Naive thymus-derived CD4-positive, alpha-beta T cell (primary cell): ENCODE measurements at regions of chr12 and their contacts with region 1.

Region 1: GRCh38 chr12:49322708-49323523 is at the start of gene TROAP:
- DNase-seq: peak; percentile 89 to 98 (median 96)
- ATAC-seq: peak; percentile 97
- H3K4me3 ChIP-seq: peak within 1 kb of the TSS; percentile 75
- H3K4me3 Mint-ChIP-seq: peak within 1 kb of the TSS; percentile 86 to 98 (median 92)
- H3K27ac ChIP-seq: peak within 1 kb of the TSS; percentile 72
- H3K27ac Mint-ChIP-seq: peak within 1 kb of the TSS; percentile 29 to 95 (median 83)
- H3K4me1 ChIP-seq: peaks cover 5 to 14% of the 10 kb centered on the region in 2 donors
- H3K4me1 Mint-ChIP-seq: peaks cover 16 to 25% (median 19%) of the 10 kb centered on the region in 7 donors
- H3K27me3 ChIP-seq: no peaks in the 10 kb centered on the region
- H3K27me3 Mint-ChIP-seq: peaks cover 0 to 5% (median 0%) of the 10 kb centered on the region in 5 donors
- total RNA-seq, gene TROAP: 0.83 to 58.2 (median 1.3) TPM in 4 of 5 experiments, not detected in the other

Region 2: GRCh38 chr12:49069507-49070346 is 253.2 kb before region 1 on chr12 and contains the start of gene RHEBL1:
- CTCF ChIA-PET with region 1: no interaction called
- POLR2A ChIA-PET with region 1: interaction called, 3 read pairs
- intact Hi-C with region 1: loop called in 1 of 2 experiments (anchors 1 kb)
- DNase-seq: peak; percentile 93 to 99 (median 96)
- ATAC-seq: peak; percentile 100
- H3K4me3 ChIP-seq: peak within 1 kb of the TSS; percentile 99
- H3K4me3 Mint-ChIP-seq: peak within 1 kb of the TSS; percentile 86 to 99 (median 96)
- H3K27ac ChIP-seq: peak within 1 kb of the TSS; percentile 74
- H3K27ac Mint-ChIP-seq: peak within 1 kb of the TSS; percentile 77 to 92 (median 86)
- H3K4me1 ChIP-seq: peaks cover 5 to 13% of the 10 kb centered on the region in 2 donors
- H3K4me1 Mint-ChIP-seq: peaks cover 14 to 31% (median 18%) of the 10 kb centered on the region in 7 donors
- H3K27me3 ChIP-seq: no peaks in the 10 kb centered on the region
- H3K27me3 Mint-ChIP-seq: no peaks in the 10 kb centered on the region
- total RNA-seq, gene RHEBL1: 1.8 to 9.4 (median 3.3) TPM

Region 3: GRCh38 chr12:49296034-49296835 is 26.7 kb before region 1 on chr12:
- CTCF ChIA-PET with region 1: no interaction called
- POLR2A ChIA-PET with region 1: no interaction called
- intact Hi-C with region 1: loop called (anchors 1 to 2 kb)
- DNase-seq: peak; percentile 37 to 75 (median 58)
- ATAC-seq: peak; percentile 82
- H3K4me3 ChIP-seq: peak overlapping the region; percentile 36
- H3K4me3 Mint-ChIP-seq: peak overlapping the region; percentile 57 to 83 (median 74)
- H3K27ac ChIP-seq: no peak overlapping the region
- H3K27ac Mint-ChIP-seq: no peak overlapping the region
- H3K4me1 ChIP-seq: peaks cover 10 to 11% of the 10 kb centered on the region in 2 donors
- H3K4me1 Mint-ChIP-seq: peaks cover 7 to 27% (median 21%) of the 10 kb centered on the region in 7 donors
- H3K27me3 ChIP-seq: peaks cover 0 to 28% of the 10 kb centered on the region in 2 donors
- H3K27me3 Mint-ChIP-seq: peaks cover 38 to 68% (median 46%) of the 10 kb centered on the region in 5 donors

Region 4: GRCh38 chr12:49342066-49342913 is 19.4 kb after region 1 on chr12:
- CTCF ChIA-PET with region 1: interaction called, 4 read pairs
- POLR2A ChIA-PET with region 1: interaction called, 4 read pairs
- intact Hi-C with region 1: loop called (anchors 1 kb)
- DNase-seq: peak; percentile 30 to 83 (median 61)
- ATAC-seq: peak; percentile 82
- H3K4me3 ChIP-seq: peak overlapping the region; percentile 43
- H3K4me3 Mint-ChIP-seq: peak overlapping the region; percentile 61 to 92 (median 76)
- H3K27ac ChIP-seq: no peak overlapping the region
- H3K27ac Mint-ChIP-seq: no peak overlapping the region
- H3K4me1 ChIP-seq: peaks cover 37 to 46% of the 10 kb centered on the region in 2 donors
- H3K4me1 Mint-ChIP-seq: peaks cover 19 to 59% (median 46%) of the 10 kb centered on the region in 7 donors
- H3K27me3 ChIP-seq: peaks cover 9 to 27% of the 10 kb centered on the region in 2 donors
- H3K27me3 Mint-ChIP-seq: peaks cover 58 to 93% (median 67%) of the 10 kb centered on the region in 5 donors

Region 5: GRCh38 chr12:49567611-49568441 is 244.9 kb after region 1 on chr12 and contains the start of gene MCRS1:
- CTCF ChIA-PET with region 1: no interaction called
- POLR2A ChIA-PET with region 1: interaction called, 3 read pairs
- intact Hi-C with region 1: loop called in 1 of 2 experiments (anchors 1 kb)
- DNase-seq: peak; percentile 89 to 94 (median 91)
- ATAC-seq: peak; percentile 92
- H3K4me3 ChIP-seq: peak within 1 kb of the TSS; percentile 81
- H3K4me3 Mint-ChIP-seq: peak within 1 kb of the TSS; percentile 94 to 100 (median 99)
- H3K27ac ChIP-seq: peak within 1 kb of the TSS; percentile 91
- H3K27ac Mint-ChIP-seq: peak within 1 kb of the TSS; percentile 98 to 100 (median 99)
- H3K4me1 ChIP-seq: peaks cover 33 to 42% of the 10 kb centered on the region in 2 donors
- H3K4me1 Mint-ChIP-seq: peaks cover 45 to 76% (median 61%) of the 10 kb centered on the region in 7 donors
- H3K27me3 ChIP-seq: no peaks in the 10 kb centered on the region
- H3K27me3 Mint-ChIP-seq: peaks cover 0 to 3% (median 0%) of the 10 kb centered on the region in 5 donors
- total RNA-seq, gene MCRS1: 70.0 to 85.2 (median 71.4) TPM